ENCODE measurements at regions of chr9 and their contacts with region 1.

Region 1: GRCh38 chr9:104927912-104928740 is at the start of gene ABCA1:
- DNase-seq: peak; percentile 93 to 96
- ATAC-seq: peak; percentile 84 to 91 (median 86)
- H3K4me3 ChIP-seq: peak within 1 kb of the TSS; percentile 99
- H3K27ac ChIP-seq: peak within 1 kb of the TSS; percentile 89
- H3K4me1 ChIP-seq: peaks cover 18% of the 10 kb centered on the region
- H3K27me3 ChIP-seq: no peaks in the 10 kb centered on the region
- CTCF ChIP-seq: no peak
- total RNA-seq, gene ABCA1: 8.2 to 26.1 (median 16.2) TPM

Region 2: GRCh38 chr9:104863180-104863883 is 64.8 kb before region 1 on chr9:
- intact Hi-C with region 1: loop called (anchors 5 to 10 kb)
- DNase-seq: no peak
- ATAC-seq: peak; percentile 45 to 87 (median 75)
- H3K4me3 ChIP-seq: no peak overlapping the region
- H3K27ac ChIP-seq: peak overlapping the region; percentile 40
- H3K4me1 ChIP-seq: peaks cover 37% of the 10 kb centered on the region
- H3K27me3 ChIP-seq: no peaks in the 10 kb centered on the region
- CTCF ChIP-seq: peak; percentile 79

Region 3: GRCh38 chr9:104963076-104963475 is 35.0 kb after region 1 on chr9:
- intact Hi-C with region 1: loop called (anchors 1 kb)
- DNase-seq: no peak
- ATAC-seq: no peak
- H3K4me3 ChIP-seq: no peak overlapping the region
- H3K27ac ChIP-seq: no peak overlapping the region
- H3K4me1 ChIP-seq: no peaks in the 10 kb centered on the region
- H3K27me3 ChIP-seq: peaks cover 0 to 3% (median 0%) of the 10 kb centered on the region in 3 donors
- CTCF ChIP-seq: no peak

Region 4: DNA sequence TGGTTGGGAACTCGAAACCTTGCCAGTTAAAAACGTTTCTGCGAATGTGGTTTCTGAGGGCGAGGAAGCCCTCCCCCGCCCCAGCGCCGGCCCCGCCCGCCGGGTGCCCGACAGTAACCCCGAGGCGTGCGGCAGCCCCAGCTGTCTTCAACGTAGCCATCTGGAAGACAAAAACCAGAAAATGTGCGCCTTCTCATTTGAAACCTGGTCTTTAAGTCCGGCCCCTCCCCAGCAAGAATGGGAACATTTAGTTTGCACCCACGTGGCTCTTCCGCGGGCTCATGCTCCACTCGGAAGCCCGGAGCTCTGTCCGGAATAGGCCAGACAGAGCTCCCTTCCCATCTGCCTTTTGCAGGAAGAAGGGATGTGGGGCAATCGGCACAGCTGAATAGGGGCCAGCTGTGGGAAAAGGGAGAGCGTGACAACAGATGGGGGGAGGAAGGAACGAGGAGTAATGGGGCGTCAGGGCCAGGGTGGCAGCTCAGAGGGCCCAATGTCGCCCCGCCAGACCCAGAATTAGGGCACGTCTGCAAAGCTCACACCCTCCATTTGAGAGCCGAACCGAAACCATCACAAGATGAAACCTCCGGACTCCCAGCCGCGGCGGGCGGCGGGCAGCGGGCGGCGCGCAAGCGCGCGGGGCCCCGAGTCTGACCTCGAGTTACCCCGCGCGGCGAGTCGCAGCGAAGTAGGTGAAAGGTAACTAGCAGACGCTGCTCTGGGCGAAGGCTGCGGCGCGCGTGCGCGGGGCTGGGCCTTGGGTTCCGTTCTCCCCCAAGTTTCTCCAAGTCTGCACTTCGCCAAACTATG is 63.2 kb after region 1 on chr9:
- intact Hi-C with region 1: loop called in 1 of 2 experiments (anchors 2 kb)
- DNase-seq: peak; percentile 93 to 97
- ATAC-seq: peak; percentile 87 to 91 (median 90)
- H3K4me3 ChIP-seq: peak overlapping the region; percentile 76
- H3K27ac ChIP-seq: peak overlapping the region; percentile 98
- H3K4me1 ChIP-seq: peaks cover 30% of the 10 kb centered on the region
- H3K27me3 ChIP-seq: no peaks in the 10 kb centered on the region
- CTCF ChIP-seq: no peak

Region 5: GRCh38 chr9:105157130-105157583 is 229.0 kb after region 1 on chr9:
- intact Hi-C with region 1: loop called (anchors 1 to 5 kb)
- DNase-seq: peak; percentile 47 to 69
- ATAC-seq: peak; percentile 82 to 95 (median 89)
- H3K4me3 ChIP-seq: no peak overlapping the region
- H3K27ac ChIP-seq: no peak overlapping the region
- H3K4me1 ChIP-seq: peaks cover 5% of the 10 kb centered on the region
- H3K27me3 ChIP-seq: no peaks in the 10 kb centered on the region
- CTCF ChIP-seq: peak; percentile 52

Region 6: GRCh38 chr9:105414947-105415661 is 487.0 kb after region 1 on chr9:
- intact Hi-C with region 1: loop called in 1 of 2 experiments (anchors 5 kb)
- DNase-seq: no peak
- ATAC-seq: peak; percentile 66 to 87 (median 76)
- H3K4me3 ChIP-seq: no peak overlapping the region
- H3K27ac ChIP-seq: no peak overlapping the region
- H3K4me1 ChIP-seq: no peaks in the 10 kb centered on the region
- H3K27me3 ChIP-seq: no peaks in the 10 kb centered on the region
- CTCF ChIP-seq: peak; percentile 90